Natural killer cell (primary cell): ENCODE measurements at regions of chr1 and their contacts with region 1.

Region 1: DNA sequence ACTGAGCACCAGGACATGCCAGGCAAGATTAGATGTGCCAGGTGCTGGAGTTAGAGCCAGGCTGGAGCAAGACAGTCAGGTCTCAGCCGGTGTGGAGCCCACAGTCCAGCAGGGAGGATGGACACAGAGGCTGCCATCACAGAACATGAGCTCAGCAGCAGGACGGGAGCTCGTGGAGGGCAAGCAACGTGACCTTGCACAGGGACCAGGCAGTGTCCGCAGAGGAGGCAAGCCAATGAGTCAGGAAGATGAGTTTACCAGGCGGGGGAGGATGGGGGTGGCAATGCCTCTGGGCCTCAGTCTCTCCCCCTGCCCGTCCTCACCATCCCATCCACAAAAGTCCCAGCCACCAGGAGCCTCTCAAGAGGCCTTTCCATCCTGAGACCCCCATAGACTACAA is 20.7 kb upstream of the ZC3H12A start:
- DNase-seq: no peak
- ATAC-seq: no peak
- H3K4me3 ChIP-seq: no peak overlapping the region
- H3K4me3 Mint-ChIP-seq: no peak overlapping the region
- H3K27ac ChIP-seq: no peak overlapping the region
- H3K27ac Mint-ChIP-seq: no peak overlapping the region
- H3K4me1 ChIP-seq: peaks cover 19% of the 10 kb centered on the region
- H3K4me1 Mint-ChIP-seq: peaks cover 7 to 17% of the 10 kb centered on the region in 2 donors
- H3K27me3 ChIP-seq: no peaks in the 10 kb centered on the region
- H3K27me3 Mint-ChIP-seq: no peaks in the 10 kb centered on the region
- CTCF ChIP-seq: no peak

Region 2: DNA sequence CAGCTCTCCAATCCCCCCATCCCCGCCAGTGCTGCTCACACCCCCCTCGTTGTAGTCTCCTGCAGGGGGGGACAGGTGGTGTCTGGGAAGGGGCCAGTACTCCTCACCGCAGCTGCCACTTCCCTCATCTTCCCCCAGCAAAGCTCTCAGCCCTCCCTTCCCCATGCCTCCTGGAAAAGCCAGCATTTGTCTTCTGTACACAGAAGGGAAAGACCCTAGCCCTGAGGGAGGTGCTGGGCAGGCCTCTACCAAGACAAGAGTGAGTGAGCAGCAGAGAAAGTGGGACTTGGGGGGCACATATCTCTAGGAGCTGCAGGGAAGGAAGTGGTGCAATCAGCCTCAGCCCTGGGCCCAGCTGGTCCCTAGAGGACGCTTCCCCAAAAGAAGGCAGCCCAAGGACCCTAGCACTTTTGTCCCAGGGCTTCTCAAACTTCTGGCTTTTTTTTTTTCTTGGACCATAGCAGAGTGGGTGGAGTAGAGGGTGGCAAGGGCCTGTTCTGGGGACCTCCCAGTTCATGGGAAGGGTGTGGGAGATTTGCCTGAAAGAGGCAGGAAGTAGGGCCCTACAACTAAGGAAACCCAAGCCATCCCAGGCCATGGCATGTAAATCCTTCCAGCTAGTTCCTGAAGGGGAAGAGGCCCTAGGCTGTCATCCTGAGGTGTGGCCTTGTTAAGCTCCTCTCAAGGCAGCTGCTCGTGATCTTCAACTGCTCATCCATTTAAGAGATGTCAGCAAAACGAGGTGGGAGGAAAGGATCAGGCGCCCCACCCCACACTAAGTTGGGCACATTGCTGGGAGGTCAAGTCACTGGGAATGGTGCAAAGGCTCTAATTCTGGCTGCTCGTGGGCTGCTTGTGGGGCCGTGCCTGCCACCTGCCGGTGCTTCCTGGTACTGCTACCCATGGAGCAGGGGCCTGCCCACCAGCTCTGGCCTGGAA is 33.3 kb after region 1 on chr1:
- intact Hi-C with region 1: loop called (anchors 1 kb)
- DNase-seq: peak; percentile 82 to 89
- ATAC-seq: peak; percentile 57 to 78 (median 75)
- H3K4me3 ChIP-seq: no peak overlapping the region
- H3K4me3 Mint-ChIP-seq: peak overlapping the region; percentile 43
- H3K27ac ChIP-seq: peak overlapping the region; percentile 23
- H3K27ac Mint-ChIP-seq: peak overlapping the region; percentile 80 to 99
- H3K4me1 ChIP-seq: peaks cover 14% of the 10 kb centered on the region
- H3K4me1 Mint-ChIP-seq: peaks cover 15 to 28% of the 10 kb centered on the region in 2 donors
- H3K27me3 ChIP-seq: no peaks in the 10 kb centered on the region
- H3K27me3 Mint-ChIP-seq: no peaks in the 10 kb centered on the region
- CTCF ChIP-seq: peak; percentile 96

Region 3: DNA sequence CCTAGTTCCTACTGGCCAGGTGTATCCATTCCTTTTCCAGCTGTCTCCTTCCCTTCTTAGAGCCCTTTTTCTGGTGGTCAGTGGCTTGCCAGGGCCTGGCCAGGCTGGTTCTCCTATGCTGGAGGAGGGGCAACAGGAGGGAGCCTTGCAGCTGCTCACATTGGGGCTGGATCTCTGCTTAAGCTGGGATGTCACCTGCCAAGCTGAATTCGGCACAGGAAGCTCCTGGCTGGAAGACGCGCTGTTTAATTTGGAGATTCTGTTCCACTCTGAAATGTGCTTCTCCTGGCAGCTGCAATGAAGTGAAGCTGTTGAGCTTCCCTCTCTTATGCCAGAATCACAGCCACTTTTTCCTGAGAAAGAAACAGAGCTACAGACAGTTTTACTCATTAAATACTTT is 649.0 kb after region 1 on chr1:
- intact Hi-C with region 1: no loop called
- DNase-seq: no peak
- ATAC-seq: no peak
- H3K4me3 ChIP-seq: no peak overlapping the region
- H3K4me3 Mint-ChIP-seq: no peak overlapping the region
- H3K27ac ChIP-seq: no peak overlapping the region
- H3K27ac Mint-ChIP-seq: no peak overlapping the region
- H3K4me1 ChIP-seq: no peaks in the 10 kb centered on the region
- H3K4me1 Mint-ChIP-seq: no peaks in the 10 kb centered on the region
- H3K27me3 ChIP-seq: no peaks in the 10 kb centered on the region
- H3K27me3 Mint-ChIP-seq: peaks cover 10 to 12% of the 10 kb centered on the region in 2 donors
- CTCF ChIP-seq: no peak